H1 (cell line): ENCODE measurements at regions of chr3 and their contacts with region 1.

Region 1: GRCh38 chr3:58568572-58569286 is 8.5 kb downstream of the FAM107A start:
- DNase-seq: peak in 1 of 2 experiments; percentile 95
- H3K4me3 ChIP-seq: no peak overlapping the region
- H3K27ac ChIP-seq: no peak overlapping the region
- H3K4me1 ChIP-seq: peaks cover 6 to 22% (median 16%) of the 10 kb centered on the region in 4 experiments
- H3K27me3 ChIP-seq: peaks cover 0 to 2% (median 0%) of the 10 kb centered on the region in 4 experiments; a peak in 2 of 7 replicates
- CTCF ChIP-seq: peak; percentile 85 to 96 (median 87)
- EP300 ChIP-seq: no peak
- POLR2A ChIP-seq: no peak
- RAD21 ChIP-seq: peak; percentile 82 to 87

Region 2: DNA sequence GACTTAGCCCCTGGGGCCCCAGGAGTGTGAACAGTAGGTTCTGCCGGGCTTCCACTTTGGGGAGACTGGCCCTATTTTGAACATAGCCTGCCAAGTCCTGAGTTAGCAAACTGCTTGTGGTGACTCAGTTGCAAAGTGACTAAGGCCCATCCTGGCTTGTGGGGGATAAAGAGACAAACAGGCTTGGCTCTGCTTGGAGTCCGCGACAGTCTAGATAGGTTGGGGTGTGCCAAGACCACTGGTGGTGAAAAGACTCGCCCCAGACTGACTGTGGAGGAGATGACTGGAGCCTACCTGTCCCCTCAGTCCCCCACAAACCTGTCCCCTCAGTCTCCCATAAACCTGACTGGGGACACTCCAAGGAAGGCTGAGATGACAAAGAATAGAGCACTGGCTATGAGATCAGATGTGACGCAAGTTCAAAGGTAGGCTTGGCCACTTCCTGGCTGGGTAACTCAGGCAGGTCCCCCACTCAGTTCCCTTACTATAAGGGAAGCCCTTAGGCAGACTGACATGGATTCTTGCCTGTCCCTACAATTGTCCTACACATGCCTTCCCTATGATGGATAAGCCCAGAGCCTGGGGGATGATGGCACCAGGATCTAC is 362.2 kb before region 1 on chr3:
- CTCF ChIA-PET with region 1: no interaction called
- POLR2A ChIA-PET with region 1: no interaction called
- DNase-seq: no peak
- H3K4me3 ChIP-seq: no peak overlapping the region
- H3K27ac ChIP-seq: no peak overlapping the region
- H3K4me1 ChIP-seq: no peaks in the 10 kb centered on the region
- H3K27me3 ChIP-seq: peaks cover 0 to 3% (median 0%) of the 10 kb centered on the region in 4 experiments; a peak in 1 of 7 replicates
- CTCF ChIP-seq: no peak
- EP300 ChIP-seq: no peak
- POLR2A ChIP-seq: no peak
- RAD21 ChIP-seq: no peak

Region 3: GRCh38 chr3:58585005-58585786 is 16.5 kb after region 1 on chr3:
- CTCF ChIA-PET with region 1: interaction called, 201 read pairs
- POLR2A ChIA-PET with region 1: interaction called, 8 read pairs
- DNase-seq: peak in 1 of 2 experiments; percentile 88
- H3K4me3 ChIP-seq: peak overlapping the region; percentile 5 to 47 (median 18); a peak in 6 of 8 replicates
- H3K27ac ChIP-seq: no peak overlapping the region
- H3K4me1 ChIP-seq: peaks cover 5 to 21% (median 12%) of the 10 kb centered on the region in 4 experiments; a peak in 6 of 7 replicates
- H3K27me3 ChIP-seq: peaks cover 7 to 35% (median 31%) of the 10 kb centered on the region in 4 experiments
- CTCF ChIP-seq: peak; percentile 68 to 82 (median 77)
- EP300 ChIP-seq: 0 out of 3 replicates have a peak, but pooled peaks of 1 of the 2 experiments have one; percentile 36
- POLR2A ChIP-seq: no peak
- RAD21 ChIP-seq: peak; percentile 38 to 57

Region 4: GRCh38 chr3:58596834-58597518 is 28.2 kb after region 1 on chr3:
- CTCF ChIA-PET with region 1: interaction called, 17 read pairs
- POLR2A ChIA-PET with region 1: no interaction called
- DNase-seq: no peak
- H3K4me3 ChIP-seq: no peak overlapping the region
- H3K27ac ChIP-seq: no peak overlapping the region
- H3K4me1 ChIP-seq: peaks cover 0 to 3% (median 0%) of the 10 kb centered on the region in 4 experiments; a peak in 1 of 7 replicates
- H3K27me3 ChIP-seq: no peaks in the 10 kb centered on the region
- CTCF ChIP-seq: no peak
- EP300 ChIP-seq: no peak
- POLR2A ChIP-seq: no peak
- RAD21 ChIP-seq: no peak

Region 5: DNA sequence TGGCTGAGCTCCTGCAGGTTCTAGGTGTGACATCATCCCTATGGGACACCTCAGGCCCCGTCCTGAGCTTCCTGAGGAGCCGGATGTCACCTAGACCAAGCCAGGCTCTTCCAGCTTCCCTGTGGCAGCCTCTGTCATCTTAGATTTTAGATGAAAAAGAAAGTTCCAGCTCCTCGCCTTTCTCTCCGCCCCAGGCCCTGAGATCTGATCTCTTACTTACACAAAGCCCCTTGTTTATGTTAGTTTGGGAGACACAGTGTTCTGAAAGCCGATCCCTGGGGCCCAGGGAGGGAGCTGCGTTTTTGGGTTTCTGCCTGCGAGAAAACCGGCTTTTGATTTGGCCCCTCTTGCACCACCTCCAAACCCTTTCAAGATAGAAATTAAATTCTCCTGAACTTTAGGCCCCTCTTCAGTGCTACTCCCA is 48.6 kb after region 1 on chr3:
- CTCF ChIA-PET with region 1: interaction called, 62 read pairs
- POLR2A ChIA-PET with region 1: interaction called, 3 read pairs
- DNase-seq: no peak
- H3K4me3 ChIP-seq: no peak overlapping the region; a peak in 1 of 8 replicates
- H3K27ac ChIP-seq: no peak overlapping the region
- H3K4me1 ChIP-seq: peaks cover 0 to 4% (median 0%) of the 10 kb centered on the region in 4 experiments; a peak in 1 of 7 replicates
- H3K27me3 ChIP-seq: no peaks in the 10 kb centered on the region
- CTCF ChIP-seq: no peak
- EP300 ChIP-seq: no peak
- POLR2A ChIP-seq: no peak
- RAD21 ChIP-seq: no peak

Region 6: GRCh38 chr3:58659051-58659675 is 90.4 kb after region 1 on chr3:
- CTCF ChIA-PET with region 1: interaction called, 11 read pairs
- POLR2A ChIA-PET with region 1: no interaction called
- DNase-seq: peak; percentile 25 to 55
- H3K4me3 ChIP-seq: no peak overlapping the region
- H3K27ac ChIP-seq: no peak overlapping the region
- H3K4me1 ChIP-seq: no peaks in the 10 kb centered on the region
- H3K27me3 ChIP-seq: no peaks in the 10 kb centered on the region
- CTCF ChIP-seq: peak; percentile 52 to 77 (median 66)
- EP300 ChIP-seq: no peak
- POLR2A ChIP-seq: no peak
- RAD21 ChIP-seq: peak; percentile 67 to 75

Region 7: GRCh38 chr3:58688574-58688973 is 119.8 kb after region 1 on chr3:
- CTCF ChIA-PET with region 1: no interaction called
- POLR2A ChIA-PET with region 1: no interaction called
- DNase-seq: no peak
- H3K4me3 ChIP-seq: no peak overlapping the region
- H3K27ac ChIP-seq: no peak overlapping the region
- H3K4me1 ChIP-seq: no peaks in the 10 kb centered on the region
- H3K27me3 ChIP-seq: no peaks in the 10 kb centered on the region
- CTCF ChIP-seq: no peak
- EP300 ChIP-seq: no peak
- POLR2A ChIP-seq: no peak
- RAD21 ChIP-seq: no peak